Activated CD4-positive, alpha-beta memory T cell treated with anti-CD3 and anti-CD28 coated beads, Interleukin-2, amount 10 ng/mL, durations not matched to agents 7 days and 5 days (primary cell): ENCODE measurements at regions of chr19 and their contacts with region 1.

Region 1: DNA sequence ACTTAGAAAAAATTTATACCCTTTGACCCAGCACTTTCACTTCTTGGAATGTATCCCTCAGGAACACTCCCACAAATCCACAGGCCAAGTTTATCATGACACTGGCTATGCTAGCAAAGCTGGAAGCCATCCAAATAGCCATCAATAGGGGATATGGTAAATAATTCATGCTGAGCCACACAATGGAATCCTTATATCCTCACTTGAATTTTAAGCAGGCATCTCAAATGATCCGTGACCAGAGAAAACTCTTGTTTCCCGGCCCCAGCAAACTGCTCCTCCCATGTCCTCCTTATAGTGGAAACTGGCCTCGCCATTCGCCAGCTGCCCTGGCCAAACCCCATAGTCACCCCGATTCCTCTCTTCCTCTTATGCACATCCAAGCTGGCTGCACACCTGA is 37.6 kb downstream of the GRIK5 start:
- DNase-seq: no peak
- H3K4me3 Mint-ChIP-seq: no peak overlapping the region
- H3K27ac Mint-ChIP-seq: no peak overlapping the region
- H3K4me1 Mint-ChIP-seq: peaks cover 7% of the 10 kb centered on the region
- H3K27me3 Mint-ChIP-seq: peaks cover 13% of the 10 kb centered on the region

Region 2: GRCh38 chr19:42048992-42049391 is 16.6 kb after region 1 on chr19:
- CTCF ChIA-PET with region 1: interaction called, 32 read pairs
- POLR2A ChIA-PET with region 1: no interaction called
- DNase-seq: no peak
- H3K4me3 Mint-ChIP-seq: peak overlapping the region; percentile 15
- H3K27ac Mint-ChIP-seq: no peak overlapping the region
- H3K4me1 Mint-ChIP-seq: peaks cover 19% of the 10 kb centered on the region
- H3K27me3 Mint-ChIP-seq: peaks cover 4% of the 10 kb centered on the region

Region 3: DNA sequence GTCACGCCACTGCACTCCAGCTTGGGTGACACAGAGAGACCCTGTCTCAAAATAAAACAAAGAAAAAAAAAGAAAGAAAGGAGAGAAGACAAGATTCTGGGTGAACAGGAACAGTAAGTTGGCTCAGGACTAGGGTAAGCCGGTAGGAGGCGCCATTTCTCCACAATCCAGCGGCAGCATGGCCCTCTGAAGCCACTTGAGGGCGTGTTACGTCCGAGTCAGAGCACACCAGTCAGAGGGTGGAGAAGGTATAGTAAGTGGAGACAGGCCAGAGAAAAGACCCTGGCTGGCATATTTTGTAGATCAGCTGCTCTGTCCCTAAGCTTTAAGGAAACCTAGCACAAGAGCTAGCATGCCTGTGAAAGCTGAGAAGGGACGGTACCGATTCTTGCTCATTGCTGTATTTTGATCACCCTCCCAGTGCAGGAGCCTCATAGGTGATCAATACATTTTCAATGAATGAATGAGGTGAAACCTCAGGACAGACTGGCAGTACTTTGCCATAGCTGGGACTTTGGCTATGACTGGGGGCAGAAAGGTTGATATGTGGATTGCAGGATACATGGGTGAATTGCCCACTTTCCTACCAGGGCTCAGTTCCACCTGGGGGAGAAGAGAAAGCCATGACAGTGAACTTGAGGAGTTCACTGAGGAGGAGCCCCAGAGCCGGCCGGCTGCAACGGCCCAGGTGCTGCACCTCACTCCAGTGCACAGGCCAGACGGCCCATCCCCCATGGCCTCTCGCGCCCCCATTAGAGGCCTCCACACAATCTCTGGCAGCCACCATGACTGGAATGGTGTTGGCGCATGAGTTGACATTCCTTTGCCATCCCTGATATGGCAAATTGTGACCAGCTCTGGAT is 76.3 kb after region 1 on chr19:
- CTCF ChIA-PET with region 1: no interaction called
- POLR2A ChIA-PET with region 1: no interaction called
- DNase-seq: peak; percentile 92
- H3K4me3 Mint-ChIP-seq: no peak overlapping the region
- H3K27ac Mint-ChIP-seq: no peak overlapping the region
- H3K4me1 Mint-ChIP-seq: peaks cover 34% of the 10 kb centered on the region
- H3K27me3 Mint-ChIP-seq: no peaks in the 10 kb centered on the region